ENCODE measurements at regions of chr17 and their contacts with region 1.

Region 1: GRCh38 chr17:996554-997344 is at the start of gene TIMM22:
- DNase-seq: peak; percentile 88
- H3K4me3 ChIP-seq: peak within 1 kb of the TSS; percentile 100
- CTCF ChIP-seq: peak; percentile 92

Region 2: GRCh38 chr17:781805-782731 is 214.7 kb before region 1 on chr17 and contains the starts of genes GLOD4 and MRM3:
- CTCF ChIA-PET with region 1: interaction called, 23 read pairs
- POLR2A ChIA-PET with region 1: interaction called, 3 read pairs
- DNase-seq: no peak
- H3K4me3 ChIP-seq: peak within 1 kb of the TSS; percentile 98
- CTCF ChIP-seq: no peak

Region 3: DNA sequence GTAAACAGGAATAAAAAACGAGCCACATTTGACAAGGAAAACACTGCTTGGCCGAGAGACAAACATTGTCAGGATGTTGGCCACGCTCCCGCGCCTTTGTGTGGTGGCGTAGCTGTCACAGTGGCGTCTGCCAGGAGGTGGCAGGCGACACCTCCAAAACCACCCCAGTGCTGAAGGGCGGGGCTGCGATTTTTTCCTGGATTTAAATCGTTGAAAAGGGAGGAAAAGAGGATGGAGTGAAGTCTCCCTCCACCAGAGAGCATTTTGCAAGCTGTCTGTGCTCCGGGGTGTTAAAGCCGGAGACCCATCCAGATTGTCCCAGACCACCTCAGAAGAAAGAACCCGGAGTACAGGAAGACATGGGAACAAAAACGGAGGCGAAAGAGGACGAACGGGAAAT is 201.9 kb before region 1 on chr17:
- CTCF ChIA-PET with region 1: interaction called, 24 read pairs
- POLR2A ChIA-PET with region 1: interaction called, 3 read pairs
- DNase-seq: no peak
- H3K4me3 ChIP-seq: peak overlapping the region; percentile 3; the same call in 1 of the 2 replicates
- CTCF ChIP-seq: peak; percentile 79

Region 4: DNA sequence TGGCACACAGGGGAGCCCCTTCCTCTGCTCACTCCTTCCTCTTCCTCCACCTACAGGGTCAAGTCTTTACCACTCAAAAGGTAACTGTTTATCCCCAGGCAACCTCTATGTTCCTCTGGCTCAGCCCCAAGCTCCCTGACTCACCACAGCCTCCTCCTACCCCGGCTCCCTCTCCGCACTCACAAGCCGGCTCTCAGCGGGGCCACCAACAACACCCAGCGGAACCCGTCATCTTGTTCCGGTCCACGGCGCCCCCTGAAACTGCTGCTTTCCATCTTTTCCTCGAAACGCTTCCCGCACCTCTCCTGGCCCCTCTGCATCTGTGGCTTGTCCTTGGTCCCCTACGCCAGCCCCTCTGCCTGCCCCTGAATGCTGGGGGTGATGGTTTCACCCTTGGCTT is 75.6 kb before region 1 on chr17:
- CTCF ChIA-PET with region 1: no interaction called
- POLR2A ChIA-PET with region 1: no interaction called
- DNase-seq: no peak
- H3K4me3 ChIP-seq: no peak overlapping the region
- CTCF ChIP-seq: no peak

Measured in AG04449 (cell line).